HEK293T (cell line): ENCODE measurements at regions of chr11 and their contacts with region 1.

Region 1: DNA sequence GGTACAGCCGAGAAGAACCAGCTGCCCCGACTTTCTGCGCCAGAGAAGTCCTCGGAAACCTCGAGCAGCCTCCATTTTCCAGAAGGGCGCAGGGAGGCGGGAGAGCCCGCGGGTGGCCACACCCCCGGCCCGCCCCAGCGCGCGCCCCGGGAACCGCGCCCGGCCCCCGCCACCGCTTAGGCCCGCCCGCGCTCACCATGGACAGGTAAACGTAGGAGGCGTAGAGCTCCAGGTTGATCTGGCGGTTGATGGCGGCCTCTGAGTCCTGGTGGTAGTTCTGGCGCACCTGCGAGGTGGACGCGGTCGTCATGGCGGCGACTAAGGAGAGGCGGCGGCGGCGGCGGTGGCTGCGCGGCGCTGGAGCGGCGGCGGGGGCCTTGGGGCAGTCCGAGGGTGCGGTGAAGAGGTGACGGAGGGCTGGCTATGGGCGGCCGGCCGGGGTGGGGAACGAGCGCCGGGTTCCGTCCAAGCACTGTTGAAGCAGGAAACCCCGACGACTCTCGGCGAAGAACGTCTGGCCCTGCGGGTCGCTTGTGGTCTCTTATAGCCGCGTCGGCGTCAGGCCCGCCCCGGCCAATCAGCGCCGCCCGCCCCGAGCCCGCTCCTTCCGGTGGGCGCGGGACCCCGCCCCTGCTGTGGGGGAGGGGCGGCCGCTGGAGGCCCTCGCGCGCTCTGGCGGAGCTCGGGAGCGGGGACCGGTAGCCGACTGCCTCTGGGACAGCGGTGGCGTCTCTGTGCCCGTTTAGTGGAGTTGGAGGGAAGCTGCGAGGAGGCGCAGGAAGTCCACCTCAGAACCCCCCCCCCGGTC is at the start of gene FTH1:
- DNase-seq: peak; percentile 92

Region 2: GRCh38 chr11:61978703-61979661 is 11.7 kb after region 1 on chr11:
- CTCF ChIA-PET with region 1: no interaction called
- POLR2A ChIA-PET with region 1: interaction called, 12 read pairs
- DNase-seq: no peak

Region 3: DNA sequence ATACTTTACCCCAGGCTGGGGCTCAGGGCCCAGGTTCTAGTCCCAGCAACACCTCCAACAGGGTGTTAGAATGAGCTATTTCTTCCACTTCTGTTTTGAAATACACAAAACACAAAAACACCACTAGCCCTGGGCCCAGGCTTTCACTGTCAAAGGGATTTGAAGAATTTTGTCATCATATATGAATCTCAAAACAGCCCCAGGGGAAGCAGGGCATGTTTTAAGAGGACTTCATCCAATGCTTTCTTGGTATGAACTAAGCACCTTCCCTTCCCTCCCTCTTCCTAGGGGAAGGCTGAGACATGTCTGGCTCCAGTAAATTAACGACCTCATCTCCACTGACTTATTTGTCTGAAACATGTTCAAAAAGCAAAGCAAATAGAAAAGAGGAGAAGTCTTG is 80.7 kb after region 1 on chr11:
- CTCF ChIA-PET with region 1: no interaction called
- POLR2A ChIA-PET with region 1: interaction called, 16 read pairs
- DNase-seq: no peak

Region 4: DNA sequence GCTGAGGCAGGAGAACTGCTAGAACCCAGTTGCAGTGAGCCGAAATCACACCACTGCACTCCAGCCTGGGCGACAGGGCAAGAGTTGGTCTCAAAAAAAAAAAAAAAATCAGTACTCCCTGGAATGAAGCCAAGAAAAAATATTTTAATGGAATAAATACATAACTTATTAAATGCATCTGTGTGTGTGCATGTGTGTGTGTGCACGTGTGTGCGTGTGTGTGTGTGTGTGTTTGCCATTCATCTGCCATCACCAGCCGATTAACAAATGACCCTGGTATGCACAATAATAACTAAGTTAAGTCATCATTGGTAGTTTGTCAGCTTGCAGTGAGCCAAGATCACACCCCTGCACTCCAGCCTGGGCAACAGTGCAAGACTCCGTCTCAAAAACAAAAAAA is 416.5 kb after region 1 on chr11:
- CTCF ChIA-PET with region 1: no interaction called
- POLR2A ChIA-PET with region 1: no interaction called
- DNase-seq: no peak